GM12878 (cell line): ENCODE measurements at regions of chr3 and their contacts with region 1.

Region 1: GRCh38 chr3:189824629-189825312 is 193.6 kb downstream of the TP63 start:
- DNase-seq: no peak
- ATAC-seq: no peak
- H3K4me3 ChIP-seq: no peak overlapping the region
- H3K27ac ChIP-seq: no peak overlapping the region
- H3K4me1 ChIP-seq: peaks cover 4% of the 10 kb centered on the region; the same call in 1 of the 2 replicates
- H3K27me3 ChIP-seq: no peaks in the 10 kb centered on the region
- CTCF ChIP-seq: no peak
- EP300 ChIP-seq: no peak
- POLR2A ChIP-seq: no peak
- RAD21 ChIP-seq: no peak

Region 2: DNA sequence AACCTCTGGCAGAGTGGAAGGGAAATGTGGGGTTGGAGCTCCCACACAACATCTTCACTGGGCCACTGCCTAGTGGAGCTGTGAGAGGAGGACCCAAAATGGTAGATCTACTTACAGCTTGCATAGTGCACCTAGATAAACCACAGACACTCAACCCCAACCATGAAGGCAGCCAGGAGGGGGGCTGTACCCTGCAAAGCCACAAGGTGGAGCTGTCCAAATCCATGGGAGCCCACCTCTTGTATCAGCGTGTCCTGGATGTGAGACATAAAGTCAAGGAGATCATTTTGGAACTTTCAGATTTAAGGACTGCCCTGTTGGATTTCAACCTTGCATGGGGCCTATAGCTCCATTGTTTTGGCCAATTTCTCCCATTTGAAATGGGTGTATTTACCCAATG is 172.7 kb before region 1 on chr3:
- CTCF ChIA-PET with region 1: no interaction called
- POLR2A ChIA-PET with region 1: no interaction called
- RAD21 ChIA-PET with region 1: no interaction called
- SMC1A ChIA-PET with region 1: no interaction called
- in situ Hi-C with region 1: no loop called
- intact Hi-C with region 1: loop called (anchors 5 kb)
- DNase-seq: no peak
- ATAC-seq: no peak
- H3K4me3 ChIP-seq: no peak overlapping the region
- H3K27ac ChIP-seq: no peak overlapping the region
- H3K4me1 ChIP-seq: peaks cover 3% of the 10 kb centered on the region; the same call in 1 of the 2 replicates
- H3K27me3 ChIP-seq: no peaks in the 10 kb centered on the region
- CTCF ChIP-seq: peak in 2 of 3 experiments; percentile 36 to 37; a peak in 2 of 6 replicates
- EP300 ChIP-seq: no peak
- POLR2A ChIP-seq: no peak
- RAD21 ChIP-seq: 0 out of 2 replicates have a peak, but pooled peaks have one; percentile 3

Region 3: GRCh38 chr3:189799366-189799765 is 25.4 kb before region 1 on chr3:
- CTCF ChIA-PET with region 1: interaction called, 3 read pairs
- POLR2A ChIA-PET with region 1: no interaction called
- RAD21 ChIA-PET with region 1: interaction called, 12 read pairs
- SMC1A ChIA-PET with region 1: interaction called, 5 read pairs
- in situ Hi-C with region 1: no loop called
- intact Hi-C with region 1: no loop called
- DNase-seq: peak; percentile 42
- ATAC-seq: peak; percentile 50
- H3K4me3 ChIP-seq: no peak overlapping the region
- H3K27ac ChIP-seq: no peak overlapping the region
- H3K4me1 ChIP-seq: 0 out of 2 replicates have a peak, but pooled peaks cover 4% of the 10 kb centered on the region
- H3K27me3 ChIP-seq: no peaks in the 10 kb centered on the region
- CTCF ChIP-seq: no peak
- EP300 ChIP-seq: no peak
- POLR2A ChIP-seq: no peak
- RAD21 ChIP-seq: no peak

Region 4: DNA sequence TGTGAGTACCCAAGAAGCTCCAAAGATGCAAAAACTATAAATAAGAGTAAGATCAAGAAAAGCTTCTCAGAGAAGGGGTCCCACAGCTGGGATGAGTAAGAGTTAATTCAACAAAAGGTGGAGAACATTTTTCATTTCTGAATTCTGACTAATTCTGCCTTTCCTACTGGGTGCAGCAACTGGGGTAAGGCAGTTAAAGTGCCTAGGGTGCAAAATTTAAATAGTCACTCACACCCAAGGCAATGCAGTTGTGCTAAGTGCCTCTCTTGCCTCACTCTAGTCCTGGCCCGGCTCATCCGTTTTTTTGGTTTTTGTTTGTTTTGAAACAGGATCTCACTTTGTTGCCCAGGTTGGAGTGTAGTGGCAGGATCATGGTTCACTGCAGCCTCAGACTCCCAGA is 46.6 kb after region 1 on chr3:
- CTCF ChIA-PET with region 1: no interaction called
- POLR2A ChIA-PET with region 1: no interaction called
- RAD21 ChIA-PET with region 1: no interaction called
- SMC1A ChIA-PET with region 1: no interaction called
- in situ Hi-C with region 1: no loop called
- intact Hi-C with region 1: no loop called
- DNase-seq: no peak
- ATAC-seq: no peak
- H3K4me3 ChIP-seq: no peak overlapping the region
- H3K27ac ChIP-seq: no peak overlapping the region
- H3K4me1 ChIP-seq: no peaks in the 10 kb centered on the region
- H3K27me3 ChIP-seq: no peaks in the 10 kb centered on the region
- CTCF ChIP-seq: no peak
- EP300 ChIP-seq: no peak
- POLR2A ChIP-seq: no peak
- RAD21 ChIP-seq: no peak